Prostate gland (tissue), 2 donors: ENCODE measurements at regions of chr6 and their contacts with region 1.

Region 1: GRCh38 chr6:169724494-169725124 is at the start of gene PHF10:
- DNase-seq: peak; percentile 40
- H3K4me3 ChIP-seq: peak within 1 kb of the TSS; percentile 63 to 82
- H3K27ac ChIP-seq: peak within 1 kb of the TSS; percentile 89 to 94
- H3K4me1 ChIP-seq: peaks cover 9% of the 10 kb centered on the region
- H3K27me3 ChIP-seq: no peaks in the 10 kb centered on the region
- CTCF ChIP-seq: no peak
- POLR2A ChIP-seq: peak; percentile 6
- total RNA-seq, gene PHF10: 45.9 to 50.4 TPM

Region 2: GRCh38 chr6:169701954-169702839 is 22.4 kb before region 1 on chr6 and contains the starts of genes C6orf120 and WDR27:
- intact Hi-C with region 1: loop called (anchors 1 kb)
- DNase-seq: peak; percentile 93
- H3K4me3 ChIP-seq: peak within 1 kb of the TSS; percentile 95 to 97
- H3K27ac ChIP-seq: peak within 1 kb of the TSS; percentile 95
- H3K4me1 ChIP-seq: no peaks in the 10 kb centered on the region
- H3K27me3 ChIP-seq: no peaks in the 10 kb centered on the region
- CTCF ChIP-seq: peak in 1 of 4 experiments; percentile 20
- POLR2A ChIP-seq: peak; percentile 94
- total RNA-seq, gene C6orf120: 23.6 to 41.8 TPM
- total RNA-seq, gene WDR27: 17.8 to 53.1 TPM